ENCODE measurements at regions of chr11 and their contacts with region 1.

Region 1: GRCh38 chr11:4072668-4073285 is 21.8 kb upstream of the RRM1 start:
- DNase-seq: peak; percentile 49
- ATAC-seq: peak; percentile 72
- H3K4me3 Mint-ChIP-seq: no peak overlapping the region
- H3K27ac Mint-ChIP-seq: peak overlapping the region; percentile 74
- H3K4me1 Mint-ChIP-seq: peaks cover 35% of the 10 kb centered on the region
- H3K27me3 Mint-ChIP-seq: no peaks in the 10 kb centered on the region
- CTCF ChIP-seq: peak; percentile 78

Region 2: GRCh38 chr11:3824714-3825472 is 247.9 kb before region 1 on chr11:
- CTCF ChIA-PET with region 1: interaction called, 33 read pairs
- POLR2A ChIA-PET with region 1: no interaction called
- intact Hi-C with region 1: no loop called
- DNase-seq: peak; percentile 92
- ATAC-seq: peak; percentile 98
- H3K4me3 Mint-ChIP-seq: no peak overlapping the region
- H3K27ac Mint-ChIP-seq: peak overlapping the region; percentile 76
- H3K4me1 Mint-ChIP-seq: peaks cover 34% of the 10 kb centered on the region
- H3K27me3 Mint-ChIP-seq: no peaks in the 10 kb centered on the region
- CTCF ChIP-seq: peak; percentile 82

Region 3: GRCh38 chr11:3867209-3868091 is 205.3 kb before region 1 on chr11:
- CTCF ChIA-PET with region 1: interaction called, 14 read pairs
- POLR2A ChIA-PET with region 1: no interaction called
- intact Hi-C with region 1: no loop called
- DNase-seq: peak; percentile 66
- ATAC-seq: peak; percentile 65
- H3K4me3 Mint-ChIP-seq: peak overlapping the region; percentile 51
- H3K27ac Mint-ChIP-seq: peak overlapping the region; percentile 94
- H3K4me1 Mint-ChIP-seq: peaks cover 85% of the 10 kb centered on the region
- H3K27me3 Mint-ChIP-seq: no peaks in the 10 kb centered on the region
- CTCF ChIP-seq: no peak

Region 4: DNA sequence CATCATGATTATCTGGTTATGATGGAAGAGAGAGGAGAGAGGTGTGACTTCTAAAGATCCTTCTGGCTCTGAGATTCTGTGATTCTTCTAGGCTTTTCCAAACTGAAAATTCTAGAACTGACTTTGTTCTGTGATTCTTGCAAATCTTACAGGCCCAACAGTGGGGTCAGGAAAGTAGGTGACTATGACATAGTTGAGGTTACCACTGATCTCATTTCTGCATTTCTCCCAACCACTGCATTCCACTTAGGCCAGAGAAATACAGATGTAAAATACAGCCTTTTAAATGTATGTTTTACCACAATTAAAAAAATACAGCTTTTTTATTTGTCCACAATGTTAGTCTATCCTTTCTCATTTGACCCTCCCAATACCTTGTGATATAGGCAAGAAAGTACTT is 133.6 kb before region 1 on chr11:
- CTCF ChIA-PET with region 1: interaction called, 19 read pairs
- POLR2A ChIA-PET with region 1: no interaction called
- intact Hi-C with region 1: no loop called
- DNase-seq: no peak
- ATAC-seq: no peak
- H3K4me3 Mint-ChIP-seq: no peak overlapping the region
- H3K27ac Mint-ChIP-seq: peak overlapping the region; percentile 35
- H3K4me1 Mint-ChIP-seq: peaks cover 84% of the 10 kb centered on the region
- H3K27me3 Mint-ChIP-seq: no peaks in the 10 kb centered on the region
- CTCF ChIP-seq: no peak

Region 5: DNA sequence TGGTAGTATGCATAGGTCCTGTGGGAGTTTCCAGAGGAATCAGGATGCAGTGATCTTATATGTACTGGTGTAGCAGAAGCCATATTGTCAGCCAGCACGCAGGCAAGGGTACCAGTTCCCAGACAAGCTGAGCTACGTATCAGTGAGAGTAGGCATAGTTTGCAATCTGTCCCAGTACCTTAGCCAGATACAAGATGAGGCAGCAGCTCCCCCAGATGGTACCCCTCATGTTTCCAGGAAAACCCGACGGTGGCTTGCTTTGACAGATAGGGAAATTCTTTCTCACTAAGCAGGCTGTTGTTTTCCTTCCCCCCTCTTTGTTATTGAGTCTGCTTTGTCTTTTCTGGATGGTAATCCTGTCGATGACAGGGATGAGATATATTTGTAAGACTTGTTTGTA is 87.9 kb before region 1 on chr11:
- CTCF ChIA-PET with region 1: interaction called, 13 read pairs
- POLR2A ChIA-PET with region 1: no interaction called
- intact Hi-C with region 1: no loop called
- DNase-seq: peak; percentile 79
- ATAC-seq: peak; percentile 83
- H3K4me3 Mint-ChIP-seq: no peak overlapping the region
- H3K27ac Mint-ChIP-seq: peak overlapping the region; percentile 77
- H3K4me1 Mint-ChIP-seq: peaks cover 79% of the 10 kb centered on the region
- H3K27me3 Mint-ChIP-seq: no peaks in the 10 kb centered on the region
- CTCF ChIP-seq: peak; percentile 31

Region 6: DNA sequence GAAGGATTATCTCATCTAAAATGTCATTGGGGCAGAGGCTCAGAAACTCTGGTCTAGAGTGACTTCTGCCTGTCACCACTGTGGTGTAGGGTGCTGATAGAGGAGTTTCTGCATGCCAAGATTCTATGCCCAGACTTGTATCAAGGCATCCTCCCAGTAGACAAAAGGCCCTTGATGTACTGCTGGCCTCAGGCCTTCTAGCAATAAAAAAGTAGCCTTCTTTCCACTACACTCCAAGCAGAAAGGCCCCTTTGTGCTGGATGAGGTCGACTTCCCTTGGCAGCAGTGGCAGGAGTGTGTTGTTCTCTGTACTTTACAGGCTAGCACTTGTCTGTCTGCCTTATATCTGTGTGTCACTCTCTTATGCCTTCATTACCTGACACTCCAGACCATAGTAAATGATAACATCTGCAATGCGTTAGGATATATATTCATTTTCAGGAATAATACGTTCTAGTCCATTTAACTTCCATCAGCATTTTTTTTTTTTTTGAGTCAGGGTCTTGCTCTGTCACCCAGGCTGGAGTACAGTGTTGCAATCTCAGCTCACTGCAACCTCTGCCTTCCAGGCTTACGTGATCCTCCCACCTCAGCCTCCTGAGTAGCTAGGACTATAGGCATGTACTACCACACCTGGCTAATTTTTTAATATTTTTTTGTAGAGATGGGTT is 27.7 kb before region 1 on chr11:
- CTCF ChIA-PET with region 1: interaction called, 12 read pairs
- POLR2A ChIA-PET with region 1: no interaction called
- intact Hi-C with region 1: no loop called
- DNase-seq: no peak
- ATAC-seq: no peak
- H3K4me3 Mint-ChIP-seq: no peak overlapping the region
- H3K27ac Mint-ChIP-seq: no peak overlapping the region
- H3K4me1 Mint-ChIP-seq: peaks cover 32% of the 10 kb centered on the region
- H3K27me3 Mint-ChIP-seq: no peaks in the 10 kb centered on the region
- CTCF ChIP-seq: no peak

Measured in activated CD8-positive, alpha-beta T cell treated with anti-CD3 and anti-CD28 coated beads for 36 hours (primary cell).